ENCODE measurements at regions of chr3 and their contacts with region 1.

Region 1: DNA sequence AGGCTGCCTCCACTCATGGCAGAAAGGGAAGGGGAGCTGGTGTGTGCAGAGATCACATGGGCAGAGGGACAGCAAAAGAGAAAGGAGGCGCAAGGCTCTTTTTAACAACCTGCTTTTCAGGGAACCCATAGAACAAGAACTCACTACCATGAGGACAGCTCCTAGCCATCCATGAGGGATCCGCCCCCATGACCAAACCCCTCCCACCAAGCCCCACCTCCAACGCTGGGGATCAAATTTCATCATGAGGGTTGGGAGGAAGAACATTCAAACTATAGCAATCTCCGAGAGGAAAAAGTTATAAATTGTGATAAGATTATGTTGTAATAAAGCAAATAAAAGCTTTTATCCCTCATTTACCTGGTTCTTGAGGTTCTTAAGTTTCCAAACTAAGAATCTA is 84.7 kb upstream of the LMCD1 start:
- DNase-seq: peak; percentile 66
- H3K4me3 ChIP-seq: no peak overlapping the region
- H3K27ac ChIP-seq: peak overlapping the region; percentile 34
- H3K4me1 ChIP-seq: peaks cover 24% of the 10 kb centered on the region
- H3K27me3 ChIP-seq: no peaks in the 10 kb centered on the region
- CTCF ChIP-seq: no peak

Region 2: GRCh38 chr3:6935970-6936369 is 1481.0 kb before region 1 on chr3:
- CTCF ChIA-PET with region 1: no interaction called
- POLR2A ChIA-PET with region 1: no interaction called
- intact Hi-C with region 1: loop called (anchors 10 kb)
- DNase-seq: no peak
- H3K4me3 ChIP-seq: no peak overlapping the region
- H3K27ac ChIP-seq: no peak overlapping the region
- H3K4me1 ChIP-seq: no peaks in the 10 kb centered on the region
- H3K27me3 ChIP-seq: no peaks in the 10 kb centered on the region
- CTCF ChIP-seq: no peak

Region 3: GRCh38 chr3:7854266-7854665 is 562.7 kb before region 1 on chr3:
- CTCF ChIA-PET with region 1: no interaction called
- POLR2A ChIA-PET with region 1: no interaction called
- intact Hi-C with region 1: no loop called
- DNase-seq: no peak
- H3K4me3 ChIP-seq: no peak overlapping the region
- H3K27ac ChIP-seq: no peak overlapping the region
- H3K4me1 ChIP-seq: no peaks in the 10 kb centered on the region
- H3K27me3 ChIP-seq: peaks cover 17% of the 10 kb centered on the region
- CTCF ChIP-seq: no peak

Region 4: DNA sequence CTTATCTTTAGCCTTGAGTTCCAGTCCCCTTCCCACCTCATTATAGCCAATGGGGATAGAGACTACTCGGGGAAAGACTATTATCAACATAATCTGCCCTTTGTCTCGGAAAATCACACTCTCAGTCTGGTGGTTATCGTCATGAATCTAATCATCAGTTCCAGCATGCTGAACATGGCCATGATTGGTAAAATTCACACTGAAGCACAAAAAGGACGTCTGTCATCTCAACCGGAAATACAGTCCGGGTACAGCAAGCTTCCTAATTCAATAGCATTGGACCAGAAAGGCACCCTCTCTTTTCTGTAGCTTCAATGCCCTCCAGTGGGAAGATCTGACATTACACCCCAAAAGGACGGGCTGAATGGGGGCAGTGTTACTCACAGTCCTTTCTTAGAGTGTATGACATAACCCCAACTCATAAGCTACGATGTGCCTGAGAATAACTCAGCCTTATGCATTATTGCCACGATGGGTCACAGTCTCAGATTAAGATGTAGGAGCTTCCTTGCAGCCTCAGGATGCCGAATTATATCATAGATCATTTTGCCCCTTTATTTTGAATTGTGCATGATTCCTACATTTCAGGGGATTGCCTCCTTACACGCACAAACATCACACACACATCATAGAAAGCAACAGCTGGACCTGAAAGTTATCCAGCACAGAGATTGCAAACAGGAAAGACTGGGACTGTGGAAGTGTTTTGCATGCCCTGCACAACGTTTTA is 305.7 kb before region 1 on chr3:
- CTCF ChIA-PET with region 1: interaction called, 6 read pairs
- POLR2A ChIA-PET with region 1: no interaction called
- intact Hi-C with region 1: loop called (anchors 2 kb)
- DNase-seq: peak; percentile 92
- H3K4me3 ChIP-seq: no peak overlapping the region
- H3K27ac ChIP-seq: no peak overlapping the region
- H3K4me1 ChIP-seq: peaks cover 10% of the 10 kb centered on the region
- H3K27me3 ChIP-seq: no peaks in the 10 kb centered on the region
- CTCF ChIP-seq: peak; percentile 88

Region 5: DNA sequence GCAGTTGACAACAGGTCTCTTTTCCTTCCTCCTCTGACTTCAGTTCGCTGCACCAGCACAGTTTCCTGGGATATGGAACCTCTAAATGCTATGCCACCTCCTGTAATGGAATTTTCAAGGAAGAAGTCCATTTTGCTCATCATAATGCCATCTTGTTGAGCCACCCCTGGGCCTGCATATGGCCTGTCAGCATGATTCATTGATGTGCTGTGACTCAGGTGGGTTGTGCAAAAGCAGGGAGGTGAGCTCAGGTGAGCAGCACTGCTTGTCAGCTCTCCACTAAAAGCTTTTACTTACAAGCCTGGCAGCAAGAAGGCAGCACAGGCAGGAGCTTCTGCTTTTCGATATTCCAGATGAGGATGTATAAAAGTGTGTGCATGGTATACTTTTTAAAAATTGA is 162.5 kb before region 1 on chr3:
- CTCF ChIA-PET with region 1: interaction called, 6 read pairs
- POLR2A ChIA-PET with region 1: interaction called, 3 read pairs
- intact Hi-C with region 1: loop called (anchors 2 kb)
- DNase-seq: no peak
- H3K4me3 ChIP-seq: no peak overlapping the region
- H3K27ac ChIP-seq: peak overlapping the region; percentile 96
- H3K4me1 ChIP-seq: peaks cover 53% of the 10 kb centered on the region
- H3K27me3 ChIP-seq: no peaks in the 10 kb centered on the region
- CTCF ChIP-seq: no peak

Region 6: GRCh38 chr3:8324740-8325139 is 92.2 kb before region 1 on chr3:
- CTCF ChIA-PET with region 1: interaction called, 32 read pairs
- POLR2A ChIA-PET with region 1: no interaction called
- intact Hi-C with region 1: loop called (anchors 1 kb)
- DNase-seq: peak; percentile 82
- H3K4me3 ChIP-seq: no peak overlapping the region
- H3K27ac ChIP-seq: peak overlapping the region; percentile 37
- H3K4me1 ChIP-seq: peaks cover 11% of the 10 kb centered on the region
- H3K27me3 ChIP-seq: no peaks in the 10 kb centered on the region
- CTCF ChIP-seq: peak; percentile 89